Activated naive CD4-positive, alpha-beta T cell treated with anti-CD3 and anti-CD28 coated beads, Interleukin-2, amount 10 ng/mL, durations not matched to agents 7 days and 5 days (primary cell): ENCODE measurements at regions of chr4 and their contacts with region 1.

Region 1: GRCh38 chr4:36399762-36400353 is 118.4 kb downstream of the DTHD1 start:
- DNase-seq: peak; percentile 67
- H3K4me3 Mint-ChIP-seq: no peak overlapping the region
- H3K27ac Mint-ChIP-seq: no peak overlapping the region
- H3K4me1 Mint-ChIP-seq: peaks cover 4% of the 10 kb centered on the region
- H3K27me3 Mint-ChIP-seq: peaks cover 13% of the 10 kb centered on the region

Region 2: DNA sequence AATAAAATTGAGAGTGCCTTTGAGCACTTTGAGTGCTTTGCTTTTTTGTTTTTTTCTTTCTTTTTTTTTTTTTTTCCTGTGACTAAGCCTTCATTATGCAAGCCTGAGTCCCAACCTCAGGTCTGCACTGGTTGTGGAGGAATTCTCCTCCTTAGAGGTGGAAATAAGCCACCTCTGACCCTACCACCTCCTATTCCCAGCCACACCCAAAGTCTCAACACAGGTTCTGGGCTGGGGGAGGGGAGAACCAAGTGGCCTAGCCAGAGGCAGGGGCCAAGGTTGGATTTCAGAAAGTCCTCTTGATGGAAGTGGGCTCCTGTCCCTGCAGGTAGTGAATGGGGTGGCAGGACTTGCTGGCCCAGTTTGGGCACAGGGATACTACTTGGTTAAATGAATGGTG is 335.7 kb before region 1 on chr4:
- CTCF ChIA-PET with region 1: no interaction called
- DNase-seq: no peak
- H3K4me3 Mint-ChIP-seq: no peak overlapping the region
- H3K27ac Mint-ChIP-seq: no peak overlapping the region
- H3K4me1 Mint-ChIP-seq: no peaks in the 10 kb centered on the region
- H3K27me3 Mint-ChIP-seq: no peaks in the 10 kb centered on the region

Region 3: GRCh38 chr4:36187723-36188333 is 212.0 kb before region 1 on chr4:
- CTCF ChIA-PET with region 1: interaction called, 13 read pairs
- DNase-seq: no peak
- H3K4me3 Mint-ChIP-seq: no peak overlapping the region
- H3K27ac Mint-ChIP-seq: no peak overlapping the region
- H3K4me1 Mint-ChIP-seq: peaks cover 18% of the 10 kb centered on the region
- H3K27me3 Mint-ChIP-seq: no peaks in the 10 kb centered on the region

Region 4: GRCh38 chr4:36255577-36255976 is 144.3 kb before region 1 on chr4:
- CTCF ChIA-PET with region 1: interaction called, 56 read pairs
- DNase-seq: peak; percentile 82
- H3K4me3 Mint-ChIP-seq: peak overlapping the region; percentile 59
- H3K27ac Mint-ChIP-seq: peak overlapping the region; percentile 97
- H3K4me1 Mint-ChIP-seq: peaks cover 31% of the 10 kb centered on the region
- H3K27me3 Mint-ChIP-seq: no peaks in the 10 kb centered on the region

Region 5: GRCh38 chr4:36343501-36344175 is 56.2 kb before region 1 on chr4:
- CTCF ChIA-PET with region 1: interaction called, 65 read pairs
- DNase-seq: no peak
- H3K4me3 Mint-ChIP-seq: no peak overlapping the region
- H3K27ac Mint-ChIP-seq: no peak overlapping the region
- H3K4me1 Mint-ChIP-seq: peaks cover 5% of the 10 kb centered on the region
- H3K27me3 Mint-ChIP-seq: no peaks in the 10 kb centered on the region

Region 6: DNA sequence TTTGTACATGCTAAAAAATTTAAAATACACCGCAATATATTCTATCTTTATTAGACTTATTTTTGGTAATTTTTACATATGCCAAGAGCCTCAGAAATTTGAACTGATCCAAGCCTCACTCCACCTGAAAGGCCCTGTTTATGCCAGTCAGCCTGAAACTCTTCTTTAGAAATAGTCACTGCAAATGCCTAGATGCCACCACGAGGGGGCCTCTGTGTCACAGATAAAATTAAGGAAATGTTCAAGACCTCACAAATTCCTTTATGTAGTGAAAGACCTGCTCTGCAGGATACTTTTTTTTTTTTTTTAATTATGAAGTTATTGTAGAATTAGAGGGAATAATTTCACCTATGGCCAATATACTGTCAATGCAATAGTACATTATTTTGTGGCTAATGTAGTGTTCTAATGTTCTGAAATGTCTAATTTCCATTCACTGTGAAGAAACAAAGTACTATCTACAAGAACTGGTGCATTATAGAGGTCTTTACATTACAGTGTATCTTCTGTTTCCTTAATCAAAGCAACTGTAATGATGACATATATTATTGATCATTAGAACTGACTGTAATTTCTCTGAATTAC is 48.7 kb before region 1 on chr4:
- CTCF ChIA-PET with region 1: interaction called, 65 read pairs
- DNase-seq: peak; percentile 84
- H3K4me3 Mint-ChIP-seq: no peak overlapping the region
- H3K27ac Mint-ChIP-seq: no peak overlapping the region
- H3K4me1 Mint-ChIP-seq: peaks cover 19% of the 10 kb centered on the region
- H3K27me3 Mint-ChIP-seq: peaks cover 9% of the 10 kb centered on the region

Region 7: DNA sequence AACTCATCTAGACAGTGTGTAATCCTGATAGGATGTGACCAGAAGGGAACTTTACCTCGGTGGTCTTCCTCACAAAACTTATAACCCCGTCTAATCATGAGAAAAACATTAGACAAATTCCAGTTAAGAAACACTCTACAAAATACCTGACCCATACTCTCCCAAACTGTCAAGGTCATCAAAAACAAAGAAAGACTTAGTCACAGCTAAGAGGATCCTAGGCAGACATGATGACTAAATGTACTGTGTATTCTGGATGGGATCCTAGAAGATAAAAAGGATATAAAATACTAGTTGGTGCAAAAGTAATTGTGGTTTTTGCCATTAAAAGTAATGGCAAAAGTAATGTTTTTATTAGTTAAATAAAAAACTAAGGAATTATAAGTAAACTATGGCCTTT is 36.8 kb before region 1 on chr4:
- CTCF ChIA-PET with region 1: interaction called, 15 read pairs
- DNase-seq: no peak
- H3K4me3 Mint-ChIP-seq: no peak overlapping the region
- H3K27ac Mint-ChIP-seq: no peak overlapping the region
- H3K4me1 Mint-ChIP-seq: no peaks in the 10 kb centered on the region
- H3K27me3 Mint-ChIP-seq: peaks cover 7% of the 10 kb centered on the region

Region 8: GRCh38 chr4:36385951-36386571 is 13.8 kb before region 1 on chr4:
- CTCF ChIA-PET with region 1: interaction called, 18 read pairs
- DNase-seq: peak; percentile 60
- H3K4me3 Mint-ChIP-seq: peak overlapping the region; percentile 19
- H3K27ac Mint-ChIP-seq: peak overlapping the region; percentile 93
- H3K4me1 Mint-ChIP-seq: peaks cover 26% of the 10 kb centered on the region
- H3K27me3 Mint-ChIP-seq: peaks cover 4% of the 10 kb centered on the region

Region 9: GRCh38 chr4:36508394-36508793 is 108.5 kb after region 1 on chr4:
- CTCF ChIA-PET with region 1: no interaction called
- DNase-seq: no peak
- H3K4me3 Mint-ChIP-seq: no peak overlapping the region
- H3K27ac Mint-ChIP-seq: no peak overlapping the region
- H3K4me1 Mint-ChIP-seq: no peaks in the 10 kb centered on the region
- H3K27me3 Mint-ChIP-seq: no peaks in the 10 kb centered on the region

Region 10: DNA sequence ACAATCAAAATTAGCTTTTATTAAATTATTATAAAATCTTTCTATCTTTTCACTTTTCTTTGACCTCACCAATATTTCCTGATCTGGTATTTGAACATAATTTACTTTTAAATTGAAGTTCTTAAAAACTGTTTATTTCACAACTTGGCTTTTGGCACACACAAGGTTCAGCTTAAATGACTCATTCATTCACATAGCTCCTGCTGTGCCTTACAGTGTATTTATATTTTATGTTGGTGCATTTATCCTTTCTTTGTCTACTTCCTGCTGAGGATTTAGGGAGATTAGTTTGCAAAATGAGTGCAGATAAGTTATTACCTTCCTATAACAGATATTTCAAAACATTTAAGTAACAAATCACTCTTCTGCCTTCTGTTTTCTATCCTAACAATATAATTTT is 312.2 kb after region 1 on chr4:
- CTCF ChIA-PET with region 1: no interaction called
- DNase-seq: no peak
- H3K4me3 Mint-ChIP-seq: no peak overlapping the region
- H3K27ac Mint-ChIP-seq: no peak overlapping the region
- H3K4me1 Mint-ChIP-seq: no peaks in the 10 kb centered on the region
- H3K27me3 Mint-ChIP-seq: no peaks in the 10 kb centered on the region